Heart right ventricle (tissue), 16 donors: ENCODE measurements at regions of chr21 and their contacts with region 1.

Region 1: DNA sequence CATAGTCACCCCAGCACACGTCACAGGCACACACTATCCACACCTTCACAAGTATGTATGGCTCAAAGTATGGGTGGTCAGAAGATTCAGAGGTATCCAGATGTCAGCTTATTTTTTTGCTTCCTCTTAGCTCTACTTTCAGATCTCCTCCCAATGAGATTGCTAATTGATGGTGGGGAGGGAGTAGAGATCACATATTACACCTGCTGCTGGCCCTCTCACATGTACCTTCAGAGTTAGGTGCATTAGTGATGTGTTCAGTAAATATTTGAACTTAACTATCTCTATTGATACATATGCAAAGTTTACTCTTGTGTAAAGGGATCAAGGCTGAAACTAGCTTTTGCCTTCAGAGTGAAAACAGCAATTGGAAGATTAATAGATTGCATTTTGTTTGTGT is 262.6 kb downstream of the PCP4 start:
- DNase-seq: no peak
- ATAC-seq: no peak
- H3K4me3 ChIP-seq: no peak overlapping the region
- H3K27ac ChIP-seq: no peak overlapping the region
- H3K4me1 ChIP-seq: no peaks in the 10 kb centered on the region
- H3K27me3 ChIP-seq: peaks cover 0 to 12% (median 0%) of the 10 kb centered on the region in 7 donors
- CTCF ChIP-seq: no peak

Region 2: DNA sequence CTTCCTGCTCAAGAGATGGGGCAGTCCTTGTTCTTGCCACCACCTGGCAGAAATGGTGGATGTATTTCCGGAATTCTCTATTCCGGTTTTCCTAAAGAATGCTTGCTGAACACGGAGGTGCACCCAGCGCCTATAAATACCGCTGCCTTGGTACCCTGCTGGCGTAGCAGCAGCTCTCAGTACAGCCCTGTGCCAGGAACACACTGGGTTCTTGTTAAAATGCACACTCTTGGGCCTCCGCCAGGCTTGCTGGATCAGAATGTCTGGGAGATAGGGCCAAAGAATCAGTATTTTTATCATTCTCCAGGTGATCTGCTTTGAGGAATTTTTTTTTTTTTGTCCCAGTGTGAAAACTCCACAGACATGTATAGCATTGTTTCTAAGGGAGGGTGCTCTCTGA is 330.6 kb before region 1 on chr21:
- intact Hi-C with region 1: loop called in 1 of 10 experiments (anchors 5 kb)
- DNase-seq: peak; percentile 20 to 40
- ATAC-seq: peak in 7 of 8 donors; percentile 44 to 95 (median 84)
- H3K4me3 ChIP-seq: peak overlapping the region in 1 of 10 donors; percentile 7
- H3K27ac ChIP-seq: peak overlapping the region in 1 of 10 donors; percentile 38
- H3K4me1 ChIP-seq: peaks cover 0 to 7% (median 0%) of the 10 kb centered on the region in 9 donors
- H3K27me3 ChIP-seq: no peaks in the 10 kb centered on the region
- CTCF ChIP-seq: no peak